ENCODE measurements at regions of chr4 and their contacts with region 1.

Region 1: GRCh38 chr4:105246712-105247111 is 100.0 kb downstream of the TET2 start:
- DNase-seq: no peak
- ATAC-seq: no peak
- H3K4me3 ChIP-seq: no peak overlapping the region
- H3K4me3 Mint-ChIP-seq: no peak overlapping the region
- H3K27ac ChIP-seq: no peak overlapping the region
- H3K27ac Mint-ChIP-seq: no peak overlapping the region
- H3K4me1 ChIP-seq: no peaks in the 10 kb centered on the region
- H3K4me1 Mint-ChIP-seq: peaks cover 0 to 5% (median 0%) of the 10 kb centered on the region in 7 donors
- H3K27me3 ChIP-seq: no peaks in the 10 kb centered on the region
- H3K27me3 Mint-ChIP-seq: no peaks in the 10 kb centered on the region

Region 2: DNA sequence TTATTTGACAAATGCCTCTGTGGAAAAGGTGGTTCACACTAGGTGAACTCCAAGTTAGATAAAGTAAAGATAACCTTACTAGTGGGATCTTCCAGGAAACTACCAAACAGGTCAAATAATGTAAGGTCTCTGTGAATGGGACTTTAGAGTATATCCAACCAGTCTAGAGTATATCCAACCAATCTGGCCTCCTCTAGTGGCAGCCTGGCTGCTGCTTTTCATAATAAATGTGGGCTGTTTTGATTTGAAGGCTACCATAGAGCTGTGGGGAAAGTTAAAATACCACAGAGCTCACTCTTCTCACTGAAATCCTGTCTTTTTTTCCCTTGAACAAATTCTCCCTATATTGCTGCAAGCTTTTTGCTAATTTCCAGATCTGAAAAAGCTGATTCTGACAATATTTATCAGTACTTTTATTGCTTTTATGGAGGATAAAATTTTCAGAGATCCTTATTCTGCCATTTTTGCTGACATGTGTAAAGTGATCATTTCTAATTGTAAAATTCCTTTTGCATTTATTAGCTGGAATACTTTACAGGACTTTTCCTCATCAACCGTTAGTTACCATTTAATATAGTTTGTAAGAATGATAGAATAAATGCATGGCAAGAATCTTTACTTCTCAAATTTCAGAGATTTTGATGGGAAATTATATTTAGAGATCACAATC is 11.2 kb after region 1 on chr4:
- CTCF ChIA-PET with region 1: no interaction called
- POLR2A ChIA-PET with region 1: no interaction called
- intact Hi-C with region 1: loop called in 1 of 2 experiments (anchors 2 kb)
- DNase-seq: no peak
- ATAC-seq: no peak
- H3K4me3 ChIP-seq: no peak overlapping the region
- H3K4me3 Mint-ChIP-seq: no peak overlapping the region
- H3K27ac ChIP-seq: no peak overlapping the region
- H3K27ac Mint-ChIP-seq: no peak overlapping the region
- H3K4me1 ChIP-seq: no peaks in the 10 kb centered on the region
- H3K4me1 Mint-ChIP-seq: no peaks in the 10 kb centered on the region
- H3K27me3 ChIP-seq: no peaks in the 10 kb centered on the region
- H3K27me3 Mint-ChIP-seq: no peaks in the 10 kb centered on the region

Measured in naive thymus-derived CD4-positive, alpha-beta T cell (primary cell).